HAP-1 (cell line): ENCODE measurements at regions of chr15 and their contacts with region 1.

Region 1: GRCh38 chr15:30791239-30792175 is 112.2 kb upstream of the FAN1 start:
- DNase-seq: peak in 1 of 2 experiments; percentile 69
- H3K4me3 ChIP-seq: no peak overlapping the region
- H3K4me1 ChIP-seq: no peaks in the 10 kb centered on the region
- H3K27me3 ChIP-seq: no peaks in the 10 kb centered on the region; the same call in 1 of the 2 replicates

Region 2: GRCh38 chr15:31098953-31099740 is 307.6 kb after region 1 on chr15:
- in situ Hi-C with region 1: no loop called
- DNase-seq: no peak
- H3K4me3 ChIP-seq: no peak overlapping the region
- H3K4me1 ChIP-seq: no peaks in the 10 kb centered on the region
- H3K27me3 ChIP-seq: no peaks in the 10 kb centered on the region

Region 3: GRCh38 chr15:31128919-31129768 is 337.6 kb after region 1 on chr15:
- in situ Hi-C with region 1: loop called (anchors 25 kb)
- DNase-seq: peak; percentile 64 to 90
- H3K4me3 ChIP-seq: no peak overlapping the region
- H3K4me1 ChIP-seq: no peaks in the 10 kb centered on the region
- H3K27me3 ChIP-seq: no peaks in the 10 kb centered on the region